ENCODE measurements at regions of chr20 and their contacts with region 1.

Region 1: DNA sequence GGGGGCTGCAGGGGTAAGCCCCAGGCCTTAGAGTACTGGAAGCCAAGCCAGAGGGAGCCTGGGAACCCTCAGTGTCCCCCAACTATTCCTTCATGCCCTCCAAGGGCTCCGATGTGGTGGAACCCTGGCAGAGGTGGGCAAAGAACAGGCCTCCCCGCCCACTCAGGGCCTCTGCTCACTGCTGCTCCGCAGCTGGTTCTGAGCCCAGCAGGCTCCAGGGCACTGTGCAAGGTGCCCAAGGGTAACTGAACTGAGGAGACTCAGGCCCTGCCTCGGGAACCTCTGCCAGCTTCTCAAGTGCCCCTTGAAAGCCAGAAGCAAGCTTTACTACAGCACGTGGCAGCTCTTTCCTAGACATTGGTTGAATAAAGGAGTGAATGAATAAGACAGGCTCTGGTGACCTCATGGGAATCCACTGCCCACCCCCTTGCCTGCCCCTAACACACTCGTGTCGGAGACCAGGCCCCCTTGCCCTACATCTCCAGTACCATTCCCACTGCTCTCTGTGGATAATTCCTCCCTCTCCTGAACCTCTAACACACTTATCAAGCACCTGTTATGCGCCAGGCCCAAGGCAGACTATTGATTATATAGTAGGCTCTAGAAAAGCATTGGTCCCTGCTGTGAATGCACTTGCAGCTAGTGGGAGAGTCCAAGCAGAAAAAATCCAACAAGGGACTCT is 55.0 kb downstream of the TOX2 start:
- DNase-seq: no peak
- H3K4me3 Mint-ChIP-seq: no peak overlapping the region
- H3K27ac Mint-ChIP-seq: no peak overlapping the region
- H3K4me1 Mint-ChIP-seq: peaks cover under 1% of the 10 kb centered on the region
- H3K27me3 Mint-ChIP-seq: peaks cover 9% of the 10 kb centered on the region
- CTCF ChIP-seq: no peak

Region 2: GRCh38 chr20:43579861-43580793 is 389.5 kb before region 1 on chr20:
- CTCF ChIA-PET with region 1: interaction called, 10 read pairs
- intact Hi-C with region 1: no loop called
- DNase-seq: no peak
- H3K4me3 Mint-ChIP-seq: no peak overlapping the region
- H3K27ac Mint-ChIP-seq: no peak overlapping the region
- H3K4me1 Mint-ChIP-seq: peaks cover 15% of the 10 kb centered on the region
- H3K27me3 Mint-ChIP-seq: no peaks in the 10 kb centered on the region
- CTCF ChIP-seq: no peak

Region 3: DNA sequence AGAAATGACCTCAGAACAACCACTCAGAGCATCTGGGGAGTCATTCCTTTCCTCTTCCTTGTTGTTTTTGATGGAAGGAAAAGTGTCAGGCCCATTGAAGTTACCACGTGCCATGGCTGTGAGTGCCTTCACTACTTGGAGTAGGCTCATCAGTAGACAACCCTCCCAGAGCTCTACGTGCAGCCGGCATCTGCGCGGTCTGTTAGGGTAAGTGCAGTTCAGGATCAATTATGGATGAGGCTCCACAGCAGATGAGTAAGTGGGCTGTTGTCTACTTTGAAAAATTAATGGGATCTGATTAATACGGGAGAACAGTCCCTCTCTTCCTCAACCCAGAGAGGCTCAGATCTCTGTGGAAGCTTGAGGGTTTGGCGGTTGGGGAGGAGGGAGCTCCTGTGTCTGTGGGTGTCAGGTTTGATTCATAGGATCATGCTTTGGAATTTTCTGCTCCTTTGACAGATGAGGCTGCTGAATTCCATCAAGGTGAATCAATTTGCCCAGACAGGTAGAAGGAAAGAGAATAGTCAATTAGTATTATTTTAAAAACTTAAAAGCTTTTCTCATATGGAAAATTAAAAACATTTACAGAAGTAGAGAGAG is 148.8 kb before region 1 on chr20:
- CTCF ChIA-PET with region 1: no interaction called
- intact Hi-C with region 1: no loop called
- DNase-seq: no peak
- H3K4me3 Mint-ChIP-seq: no peak overlapping the region
- H3K27ac Mint-ChIP-seq: no peak overlapping the region
- H3K4me1 Mint-ChIP-seq: no peaks in the 10 kb centered on the region
- H3K27me3 Mint-ChIP-seq: peaks cover 37% of the 10 kb centered on the region
- CTCF ChIP-seq: no peak